Naive thymus-derived CD4-positive, alpha-beta T cell (primary cell): ENCODE measurements at regions of chr10 and their contacts with region 1.

Region 1: DNA sequence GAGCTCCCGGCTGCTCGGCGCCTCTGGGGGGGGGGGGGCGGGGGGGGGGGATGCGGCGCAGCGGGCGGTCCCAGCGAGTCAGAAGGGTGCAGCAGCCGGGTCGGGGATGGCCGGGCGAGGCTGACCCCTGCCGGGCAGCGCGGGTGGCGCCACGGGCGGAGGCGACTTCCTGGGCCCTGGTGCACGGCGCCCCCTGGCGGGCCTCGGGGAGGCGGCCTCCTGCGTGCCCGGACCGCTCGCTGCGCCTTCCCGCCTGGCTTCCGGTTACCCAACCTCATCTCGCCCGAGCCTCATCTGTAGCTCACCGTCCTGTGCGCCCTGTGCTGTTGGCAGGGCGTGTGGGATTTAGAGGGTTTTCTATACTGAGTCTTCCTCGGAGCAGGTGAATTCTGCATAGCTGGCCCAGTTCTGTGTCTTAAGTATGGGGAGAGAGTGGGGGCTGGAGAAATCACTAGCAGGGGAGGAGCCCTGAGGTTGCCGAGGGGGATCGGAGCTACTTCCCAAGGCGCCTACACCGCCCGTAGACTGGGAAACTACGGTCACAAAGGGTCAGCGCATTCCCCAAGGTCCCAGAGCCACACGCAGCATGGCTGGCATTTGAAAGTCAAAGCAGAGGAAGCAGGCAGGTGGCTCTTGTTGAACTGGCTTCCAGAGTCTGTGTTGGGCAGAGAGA is 28.3 kb upstream of the WDFY4 start:
- DNase-seq: peak; percentile 51 to 96 (median 81)
- ATAC-seq: peak; percentile 97
- H3K4me3 ChIP-seq: peak overlapping the region; percentile 70
- H3K4me3 Mint-ChIP-seq: peak overlapping the region; percentile 76 to 91 (median 85)
- H3K27ac ChIP-seq: no peak overlapping the region
- H3K27ac Mint-ChIP-seq: peak overlapping the region in 2 of 9 donors; percentile 65 to 73
- H3K4me1 ChIP-seq: peaks cover 4 to 5% of the 10 kb centered on the region in 2 donors
- H3K4me1 Mint-ChIP-seq: peaks cover 5 to 12% (median 7%) of the 10 kb centered on the region in 7 donors
- H3K27me3 ChIP-seq: no peaks in the 10 kb centered on the region
- H3K27me3 Mint-ChIP-seq: peaks cover 16 to 46% (median 25%) of the 10 kb centered on the region in 5 donors

Region 2: DNA sequence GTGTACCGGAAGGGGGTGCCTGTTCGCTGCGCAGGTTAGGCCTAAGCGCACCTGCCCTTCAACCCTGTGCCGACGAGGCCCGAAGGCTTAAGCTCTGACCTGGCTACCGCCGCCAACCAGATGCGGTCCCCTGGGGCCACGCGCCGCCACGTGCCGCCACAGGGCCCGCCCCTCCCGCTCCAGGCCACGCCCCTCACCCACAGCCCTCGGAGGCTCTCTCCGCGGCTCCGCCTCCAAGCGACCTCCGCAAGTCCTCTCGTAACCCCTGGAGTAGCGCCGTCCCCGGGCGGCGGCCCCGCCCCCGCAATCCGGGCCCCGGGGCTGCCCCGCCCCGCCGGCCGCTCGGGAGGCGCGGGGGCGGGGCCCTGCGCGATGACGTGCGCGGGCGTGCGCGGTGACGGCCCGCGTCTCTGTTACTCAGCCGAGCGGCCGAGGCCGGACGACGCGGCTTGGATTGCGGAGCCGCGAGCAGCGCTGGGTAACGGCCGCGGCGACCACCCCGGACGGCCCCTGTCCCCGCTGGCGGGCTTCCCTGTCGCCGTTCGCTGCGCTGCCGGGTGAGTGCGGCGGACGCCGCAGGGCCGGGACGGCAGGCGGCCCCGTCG is 350.0 kb before region 1 on chr10 and contains the start of gene MAPK8:
- CTCF ChIA-PET with region 1: no interaction called
- POLR2A ChIA-PET with region 1: no interaction called
- intact Hi-C with region 1: loop called in 1 of 2 experiments (anchors 5 kb)
- DNase-seq: peak; percentile 89 to 94 (median 93)
- ATAC-seq: peak; percentile 94
- H3K4me3 ChIP-seq: peak within 1 kb of the TSS; percentile 58
- H3K4me3 Mint-ChIP-seq: peak within 1 kb of the TSS; percentile 75 to 90 (median 86)
- H3K27ac ChIP-seq: peak within 1 kb of the TSS; percentile 93
- H3K27ac Mint-ChIP-seq: peak within 1 kb of the TSS; percentile 50 to 93 (median 83)
- H3K4me1 ChIP-seq: peaks cover 12 to 15% of the 10 kb centered on the region in 2 donors
- H3K4me1 Mint-ChIP-seq: peaks cover 21 to 42% (median 32%) of the 10 kb centered on the region in 7 donors
- H3K27me3 ChIP-seq: no peaks in the 10 kb centered on the region
- H3K27me3 Mint-ChIP-seq: peaks cover 0 to 2% (median 0%) of the 10 kb centered on the region in 5 donors
- total RNA-seq, gene MAPK8: 33.6 to 63.9 (median 45.2) TPM

Region 3: DNA sequence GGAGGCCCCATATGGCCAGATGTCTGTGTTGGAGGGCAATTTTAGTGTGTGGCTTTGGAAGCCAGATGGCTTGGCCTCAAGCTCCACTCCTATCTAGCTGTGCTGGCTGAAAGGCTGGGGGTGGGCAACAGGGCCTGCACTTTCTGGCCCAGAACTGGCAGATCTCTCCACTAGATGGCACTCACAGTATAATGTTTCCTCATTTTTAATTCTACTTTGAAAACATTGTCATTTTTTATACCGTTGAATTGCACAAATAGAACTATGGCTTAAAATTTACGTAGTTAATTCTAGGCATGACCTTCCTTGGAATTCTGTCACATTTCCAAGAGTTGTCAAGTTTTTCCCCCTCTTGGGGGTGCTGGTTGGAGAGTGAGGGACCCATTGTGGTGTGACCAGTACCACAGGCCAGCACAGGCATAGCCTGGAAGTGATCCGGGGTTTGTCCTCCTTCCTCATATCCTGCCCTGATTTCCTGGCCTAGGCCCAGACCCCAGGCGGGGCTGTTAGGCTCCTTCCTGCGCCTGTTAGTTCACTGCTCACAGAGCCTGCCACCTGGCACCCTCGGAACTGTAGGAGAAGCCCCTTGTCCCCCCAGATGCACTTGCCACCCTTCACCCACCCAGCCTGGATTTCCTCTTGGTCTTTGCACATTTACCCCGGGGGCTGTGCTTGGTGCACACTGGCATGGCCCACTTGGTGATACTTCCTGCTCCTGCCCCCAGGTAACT is 104.4 kb before region 1 on chr10:
- CTCF ChIA-PET with region 1: no interaction called
- POLR2A ChIA-PET with region 1: no interaction called
- intact Hi-C with region 1: loop called (anchors 1 to 5 kb)
- DNase-seq: peak in 1 of 9 donors; percentile 2
- ATAC-seq: peak; percentile 65
- H3K4me3 ChIP-seq: no peak overlapping the region
- H3K4me3 Mint-ChIP-seq: no peak overlapping the region
- H3K27ac ChIP-seq: no peak overlapping the region
- H3K27ac Mint-ChIP-seq: no peak overlapping the region
- H3K4me1 ChIP-seq: no peaks in the 10 kb centered on the region
- H3K4me1 Mint-ChIP-seq: no peaks in the 10 kb centered on the region
- H3K27me3 ChIP-seq: no peaks in the 10 kb centered on the region
- H3K27me3 Mint-ChIP-seq: peaks cover 0 to 8% (median 3%) of the 10 kb centered on the region in 5 donors

Region 4: DNA sequence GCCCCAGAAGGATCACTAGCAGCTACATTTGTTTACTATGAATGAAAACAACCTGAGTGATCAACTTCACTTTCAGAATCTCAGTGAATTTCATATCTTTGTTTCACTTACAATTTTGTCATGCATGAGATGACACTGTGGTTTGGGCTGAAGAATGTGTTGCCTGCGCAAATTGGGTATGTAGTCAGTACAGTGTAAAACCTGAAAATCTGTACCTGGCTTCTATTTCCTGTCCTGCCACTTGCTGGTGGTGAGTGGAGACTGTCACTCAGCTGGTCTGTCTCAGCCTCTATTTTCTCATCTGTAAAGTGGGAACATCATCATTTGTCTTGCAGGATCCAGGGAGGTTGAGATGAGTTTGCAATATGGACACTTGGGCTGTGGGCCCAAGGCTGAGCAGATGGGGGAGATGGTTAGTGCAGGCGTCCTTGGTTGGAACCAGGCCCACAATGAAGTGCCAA is 146.3 kb after region 1 on chr10:
- CTCF ChIA-PET with region 1: no interaction called
- POLR2A ChIA-PET with region 1: no interaction called
- intact Hi-C with region 1: loop called in 1 of 2 experiments (anchors 2 kb)
- DNase-seq: peak in 1 of 9 donors; percentile 17
- ATAC-seq: no peak
- H3K4me3 ChIP-seq: no peak overlapping the region
- H3K4me3 Mint-ChIP-seq: peak overlapping the region in 5 of 10 donors; percentile 4 to 49 (median 21)
- H3K27ac ChIP-seq: no peak overlapping the region
- H3K27ac Mint-ChIP-seq: peak overlapping the region in 7 of 9 donors; percentile 6 to 87 (median 75)
- H3K4me1 ChIP-seq: peaks cover 0 to 66% of the 10 kb centered on the region in 2 donors
- H3K4me1 Mint-ChIP-seq: peaks cover 20 to 82% (median 75%) of the 10 kb centered on the region in 7 donors
- H3K27me3 ChIP-seq: no peaks in the 10 kb centered on the region
- H3K27me3 Mint-ChIP-seq: peaks cover 0 to 6% (median 0%) of the 10 kb centered on the region in 5 donors

Region 5: DNA sequence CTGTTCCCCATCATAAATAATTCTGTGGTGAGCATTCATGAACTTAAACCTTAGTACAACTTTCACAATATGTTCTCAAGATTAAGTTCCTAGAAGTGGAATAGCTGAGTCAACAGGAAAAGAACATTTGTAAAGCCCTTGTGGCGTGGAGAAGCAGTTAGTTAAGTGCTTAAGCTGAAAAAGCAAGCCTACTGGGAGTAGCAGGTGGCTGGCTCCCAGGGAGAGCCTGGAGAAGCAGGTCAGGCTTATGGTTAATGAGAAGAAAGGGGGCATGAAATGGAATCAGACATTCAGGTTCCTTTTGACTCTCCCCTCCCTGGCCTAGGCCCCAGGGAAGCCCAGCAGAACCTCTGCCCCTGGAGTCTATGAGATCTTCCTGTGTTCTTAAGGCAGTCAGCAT is 423.7 kb after region 1 on chr10:
- CTCF ChIA-PET with region 1: no interaction called
- POLR2A ChIA-PET with region 1: no interaction called
- intact Hi-C with region 1: no loop called
- DNase-seq: no peak
- ATAC-seq: no peak
- H3K4me3 ChIP-seq: no peak overlapping the region
- H3K4me3 Mint-ChIP-seq: peak overlapping the region in 1 of 10 donors; percentile 59
- H3K27ac ChIP-seq: no peak overlapping the region
- H3K27ac Mint-ChIP-seq: no peak overlapping the region
- H3K4me1 ChIP-seq: no peaks in the 10 kb centered on the region
- H3K4me1 Mint-ChIP-seq: peaks cover 0 to 27% (median 0%) of the 10 kb centered on the region in 7 donors
- H3K27me3 ChIP-seq: no peaks in the 10 kb centered on the region
- H3K27me3 Mint-ChIP-seq: peaks cover 2 to 28% (median 10%) of the 10 kb centered on the region in 5 donors

Region 6: GRCh38 chr10:49123981-49124920 is 467.9 kb after region 1 on chr10:
- CTCF ChIA-PET with region 1: no interaction called
- POLR2A ChIA-PET with region 1: no interaction called
- intact Hi-C with region 1: no loop called
- DNase-seq: no peak
- ATAC-seq: no peak
- H3K4me3 ChIP-seq: no peak overlapping the region
- H3K4me3 Mint-ChIP-seq: no peak overlapping the region
- H3K27ac ChIP-seq: no peak overlapping the region
- H3K27ac Mint-ChIP-seq: no peak overlapping the region
- H3K4me1 ChIP-seq: no peaks in the 10 kb centered on the region
- H3K4me1 Mint-ChIP-seq: no peaks in the 10 kb centered on the region
- H3K27me3 ChIP-seq: no peaks in the 10 kb centered on the region
- H3K27me3 Mint-ChIP-seq: peaks cover 9 to 23% (median 20%) of the 10 kb centered on the region in 5 donors

Region 7: DNA sequence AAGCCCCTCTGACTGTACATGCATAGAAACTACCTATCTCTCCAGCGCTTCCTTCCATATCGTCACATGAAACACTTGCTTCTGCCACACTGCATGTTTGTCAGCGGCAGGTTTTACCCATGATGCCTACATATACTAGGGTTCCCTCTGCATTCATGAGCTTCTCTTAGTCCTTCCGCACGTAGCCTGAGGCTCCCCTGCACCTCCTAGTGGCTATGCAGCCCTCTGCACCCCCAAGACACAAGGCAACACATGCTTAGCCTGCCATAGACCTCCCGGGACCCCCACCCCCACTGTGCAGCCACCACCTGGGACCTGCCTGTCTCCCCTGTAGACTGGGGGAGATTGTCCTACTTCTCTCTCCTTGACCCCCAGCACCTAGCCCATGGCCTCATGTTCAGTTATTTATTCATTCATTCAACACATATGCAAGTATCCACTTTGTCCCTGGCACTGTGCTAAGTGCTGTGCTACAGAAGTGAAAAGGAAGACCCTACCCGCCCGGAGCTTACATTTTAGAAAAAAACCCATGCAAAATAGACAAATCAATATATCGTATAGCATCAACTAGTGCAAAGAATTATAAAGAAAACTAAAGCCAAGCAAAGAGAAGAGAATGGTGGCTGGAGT is 508.3 kb after region 1 on chr10:
- CTCF ChIA-PET with region 1: interaction called, 7 read pairs
- POLR2A ChIA-PET with region 1: no interaction called
- intact Hi-C with region 1: loop called in 1 of 2 experiments (anchors 1 kb)
- DNase-seq: peak in 5 of 9 donors; percentile 0 to 42 (median 3)
- ATAC-seq: peak; percentile 80
- H3K4me3 ChIP-seq: no peak overlapping the region
- H3K4me3 Mint-ChIP-seq: peak overlapping the region in 1 of 10 donors; percentile 2
- H3K27ac ChIP-seq: no peak overlapping the region
- H3K27ac Mint-ChIP-seq: peak overlapping the region in 2 of 9 donors; percentile 3 to 7
- H3K4me1 ChIP-seq: no peaks in the 10 kb centered on the region
- H3K4me1 Mint-ChIP-seq: peaks cover 0 to 18% (median 5%) of the 10 kb centered on the region in 7 donors
- H3K27me3 ChIP-seq: no peaks in the 10 kb centered on the region
- H3K27me3 Mint-ChIP-seq: peaks cover 0 to 7% (median 3%) of the 10 kb centered on the region in 5 donors

Region 8: DNA sequence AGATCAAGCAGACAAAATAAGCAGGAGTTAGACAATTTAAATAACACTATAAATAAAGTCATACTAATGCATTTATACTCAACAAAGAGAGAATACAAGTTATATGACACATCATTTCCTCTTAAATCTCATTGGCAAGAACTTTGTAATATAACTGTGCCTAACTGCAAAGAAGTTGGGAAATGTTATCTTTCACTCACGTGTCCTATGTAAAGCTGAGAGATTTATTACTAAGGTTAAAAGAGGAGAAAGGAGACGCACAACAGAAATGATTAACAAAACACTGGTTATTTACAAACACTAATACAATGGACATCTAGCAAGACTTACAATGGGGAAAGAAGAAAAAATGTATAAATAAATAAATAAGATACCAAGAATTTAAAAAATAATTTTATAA is 544.5 kb after region 1 on chr10:
- CTCF ChIA-PET with region 1: no interaction called
- POLR2A ChIA-PET with region 1: no interaction called
- intact Hi-C with region 1: no loop called
- DNase-seq: no peak
- ATAC-seq: no peak
- H3K4me3 ChIP-seq: no peak overlapping the region
- H3K4me3 Mint-ChIP-seq: no peak overlapping the region
- H3K27ac ChIP-seq: no peak overlapping the region
- H3K27ac Mint-ChIP-seq: no peak overlapping the region
- H3K4me1 ChIP-seq: no peaks in the 10 kb centered on the region
- H3K4me1 Mint-ChIP-seq: no peaks in the 10 kb centered on the region
- H3K27me3 ChIP-seq: no peaks in the 10 kb centered on the region
- H3K27me3 Mint-ChIP-seq: peaks cover 13 to 67% (median 24%) of the 10 kb centered on the region in 5 donors

Region 9: GRCh38 chr10:49407552-49408137 is 751.3 kb after region 1 on chr10:
- CTCF ChIA-PET with region 1: no interaction called
- POLR2A ChIA-PET with region 1: no interaction called
- intact Hi-C with region 1: loop called in 1 of 2 experiments (anchors 2 kb)
- DNase-seq: peak; percentile 29 to 72 (median 56)
- ATAC-seq: peak; percentile 74
- H3K4me3 ChIP-seq: no peak overlapping the region
- H3K4me3 Mint-ChIP-seq: no peak overlapping the region
- H3K27ac ChIP-seq: no peak overlapping the region
- H3K27ac Mint-ChIP-seq: peak overlapping the region in 2 of 9 donors; percentile 2 to 22
- H3K4me1 ChIP-seq: no peaks in the 10 kb centered on the region
- H3K4me1 Mint-ChIP-seq: peaks cover 0 to 2% (median 0%) of the 10 kb centered on the region in 7 donors
- H3K27me3 ChIP-seq: no peaks in the 10 kb centered on the region
- H3K27me3 Mint-ChIP-seq: peaks cover 24 to 69% (median 60%) of the 10 kb centered on the region in 5 donors